B cell (primary cell): ENCODE measurements at regions of chr3 and their contacts with region 1.

Region 1: DNA sequence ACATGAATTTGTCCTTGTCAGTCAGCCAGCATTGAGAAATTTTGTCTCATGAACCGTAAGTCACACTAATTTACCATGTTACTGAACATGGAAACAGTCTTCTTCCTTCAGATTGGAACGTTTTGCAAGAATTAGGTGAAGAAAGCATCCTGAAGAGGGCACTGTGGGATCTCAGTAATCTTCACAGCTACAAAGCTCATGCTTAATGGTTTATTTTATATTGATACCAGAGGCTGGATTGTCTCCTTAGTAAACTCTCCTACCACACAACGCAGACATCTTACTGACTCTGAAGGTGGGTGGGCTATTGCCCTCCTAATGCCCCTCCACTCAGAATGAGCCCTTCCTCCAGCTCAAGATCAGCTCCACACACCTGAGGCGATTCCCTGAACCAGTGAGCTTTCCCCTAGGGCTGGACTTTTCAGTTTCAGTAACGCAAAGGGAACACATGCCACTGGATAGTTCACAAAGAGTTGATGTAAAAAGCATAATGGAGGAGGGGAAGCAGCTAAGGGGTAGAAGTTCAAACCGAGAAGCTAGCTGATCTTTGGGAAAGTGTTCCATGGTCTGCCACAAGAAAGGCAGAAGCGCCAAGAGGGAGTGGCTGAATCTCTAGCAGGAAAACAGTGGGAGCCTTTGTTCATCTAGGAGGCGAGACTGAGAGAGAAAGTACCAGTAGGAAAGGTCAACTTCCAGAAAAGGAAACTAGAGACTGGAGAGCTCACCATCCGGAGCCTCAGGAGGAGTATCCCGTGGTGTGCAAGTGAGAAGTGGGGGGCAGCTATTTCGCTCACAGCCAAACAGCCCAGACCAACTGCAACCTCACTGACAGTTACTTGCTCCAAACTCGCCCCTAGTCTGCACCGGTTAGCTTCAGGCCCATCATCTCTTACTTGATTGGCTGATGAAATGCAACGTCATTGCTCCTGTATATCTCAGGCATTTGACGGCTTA is at the start of gene SLC9C1:
- DNase-seq: peak; percentile 79
- ATAC-seq: peak; percentile 67
- H3K4me3 ChIP-seq: peak within 1 kb of the TSS; percentile 25 to 53 (median 41)
- H3K4me3 Mint-ChIP-seq: peak within 1 kb of the TSS; percentile 81
- H3K27ac ChIP-seq: peak within 1 kb of the TSS; percentile 30 to 45
- H3K27ac Mint-ChIP-seq: peak within 1 kb of the TSS; percentile 78
- H3K4me1 ChIP-seq: peaks cover 20 to 21% of the 10 kb centered on the region in 2 donors
- H3K4me1 Mint-ChIP-seq: peaks cover 30% of the 10 kb centered on the region
- H3K27me3 ChIP-seq: no peaks in the 10 kb centered on the region
- H3K27me3 Mint-ChIP-seq: no peaks in the 10 kb centered on the region
- CTCF ChIP-seq: peak; percentile 68
- total RNA-seq, gene SLC9C1: 0.41 and 0.49 TPM in 2 replicates

Region 2: GRCh38 chr3:112128843-112129727 is 164.6 kb before region 1 on chr3:
- CTCF ChIA-PET with region 1: interaction called, 10 read pairs
- POLR2A ChIA-PET with region 1: no interaction called
- intact Hi-C with region 1: loop called (anchors 5 kb)
- DNase-seq: peak; percentile 94
- ATAC-seq: peak; percentile 72
- H3K4me3 ChIP-seq: no peak overlapping the region
- H3K4me3 Mint-ChIP-seq: peak overlapping the region; percentile 50
- H3K27ac ChIP-seq: peak overlapping the region; percentile 93 to 98
- H3K27ac Mint-ChIP-seq: peak overlapping the region; percentile 91
- H3K4me1 ChIP-seq: peaks cover 76 to 90% of the 10 kb centered on the region in 2 donors
- H3K4me1 Mint-ChIP-seq: peaks cover 89% of the 10 kb centered on the region
- H3K27me3 ChIP-seq: no peaks in the 10 kb centered on the region
- H3K27me3 Mint-ChIP-seq: no peaks in the 10 kb centered on the region
- CTCF ChIP-seq: no peak

Region 3: DNA sequence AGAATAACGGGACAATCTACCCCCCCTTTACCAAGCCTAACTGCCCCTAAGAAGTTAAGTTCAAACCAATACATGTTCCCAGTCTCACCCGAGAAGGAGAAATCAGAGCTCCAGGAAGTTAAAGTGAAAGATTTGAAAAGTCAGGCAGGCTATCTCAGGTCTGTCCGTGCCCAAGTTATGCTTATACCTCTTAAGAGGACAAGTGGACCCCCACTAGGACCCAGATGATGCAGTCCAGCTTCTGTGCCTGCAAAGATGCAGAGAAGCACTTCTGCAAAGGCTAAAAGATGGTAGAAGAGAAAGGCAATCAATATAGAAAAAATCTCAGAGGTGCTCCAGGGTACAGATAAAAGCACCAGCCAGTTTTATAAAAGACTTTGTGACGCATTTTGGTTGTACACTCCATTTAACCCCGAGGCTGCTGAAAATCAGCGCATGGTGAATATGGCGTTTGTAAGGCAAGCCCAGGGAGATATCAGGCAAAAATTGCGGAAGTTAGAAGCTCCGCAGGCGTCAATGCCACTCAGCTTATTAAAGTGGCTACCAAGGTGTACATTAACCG is 10.2 kb after region 1 on chr3:
- CTCF ChIA-PET with region 1: interaction called, 40 read pairs
- POLR2A ChIA-PET with region 1: no interaction called
- intact Hi-C with region 1: no loop called
- DNase-seq: peak; percentile 77
- ATAC-seq: peak; percentile 86
- H3K4me3 ChIP-seq: peak overlapping the region; percentile 44 to 83 (median 68)
- H3K4me3 Mint-ChIP-seq: no peak overlapping the region
- H3K27ac ChIP-seq: peak overlapping the region; percentile 60 to 71
- H3K27ac Mint-ChIP-seq: no peak overlapping the region
- H3K4me1 ChIP-seq: peaks cover 22% of the 10 kb centered on the region in 2 donors
- H3K4me1 Mint-ChIP-seq: peaks cover 1% of the 10 kb centered on the region
- H3K27me3 ChIP-seq: no peaks in the 10 kb centered on the region
- H3K27me3 Mint-ChIP-seq: no peaks in the 10 kb centered on the region
- CTCF ChIP-seq: no peak

Region 4: DNA sequence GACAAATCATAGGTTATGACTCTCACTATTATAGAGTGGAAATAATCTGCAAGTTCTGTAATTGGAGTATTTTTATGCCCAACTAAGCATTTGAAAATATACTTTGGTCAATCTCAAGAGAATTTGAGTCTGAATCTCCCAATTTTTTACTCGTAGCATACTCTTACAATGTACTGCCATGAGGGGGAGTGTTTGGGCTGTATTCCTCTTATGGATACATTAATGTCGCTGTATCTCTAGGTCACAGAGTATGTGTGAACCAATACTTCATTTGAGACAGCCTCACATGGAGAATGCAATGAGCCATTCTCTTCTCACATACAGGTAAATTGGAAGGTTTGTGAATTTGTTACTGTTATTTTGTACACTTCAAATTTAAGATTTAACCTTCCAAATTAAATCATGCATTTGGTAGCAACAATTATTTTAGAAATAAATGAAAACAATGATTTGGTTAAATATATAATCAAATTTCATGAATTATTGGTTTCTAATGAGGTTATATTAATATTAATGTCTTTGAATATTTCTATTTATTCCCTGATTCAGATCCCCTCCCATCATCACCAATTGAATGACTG is 33.8 kb after region 1 on chr3:
- CTCF ChIA-PET with region 1: interaction called, 49 read pairs
- POLR2A ChIA-PET with region 1: no interaction called
- intact Hi-C with region 1: loop called (anchors 1 kb)
- DNase-seq: peak; percentile 80
- ATAC-seq: peak; percentile 99
- H3K4me3 ChIP-seq: no peak overlapping the region
- H3K4me3 Mint-ChIP-seq: no peak overlapping the region
- H3K27ac ChIP-seq: no peak overlapping the region
- H3K27ac Mint-ChIP-seq: no peak overlapping the region
- H3K4me1 ChIP-seq: peaks cover 1 to 3% of the 10 kb centered on the region in 2 donors
- H3K4me1 Mint-ChIP-seq: peaks cover 8% of the 10 kb centered on the region
- H3K27me3 ChIP-seq: no peaks in the 10 kb centered on the region
- H3K27me3 Mint-ChIP-seq: no peaks in the 10 kb centered on the region
- CTCF ChIP-seq: peak; percentile 88

Region 5: DNA sequence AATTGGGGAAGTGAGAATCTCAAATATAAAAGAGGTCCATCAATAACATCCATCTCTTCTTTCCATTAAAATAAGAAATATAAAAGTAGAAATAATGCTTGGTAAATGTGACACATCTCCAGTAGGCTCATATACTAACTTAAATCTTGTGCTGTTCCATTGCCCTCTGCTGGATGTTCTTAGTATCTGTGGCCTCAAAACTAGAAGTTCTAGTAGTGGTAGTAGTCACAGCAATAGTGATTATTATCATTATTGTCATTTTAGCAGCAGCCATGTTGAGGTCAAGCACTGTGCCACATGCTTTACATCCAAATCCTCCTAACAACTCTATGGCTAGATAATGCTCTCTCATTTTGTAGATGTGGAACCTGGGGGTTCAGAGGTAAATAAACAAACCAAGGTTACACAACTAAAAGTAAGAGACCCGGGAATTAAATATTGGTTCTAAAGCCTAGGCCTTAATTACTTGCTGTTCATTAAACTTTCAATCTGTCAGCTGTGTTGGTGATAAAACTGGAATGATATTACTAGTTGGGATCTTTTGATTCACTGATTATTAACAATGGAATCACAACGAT is 225.9 kb after region 1 on chr3:
- CTCF ChIA-PET with region 1: interaction called, 64 read pairs
- POLR2A ChIA-PET with region 1: no interaction called
- intact Hi-C with region 1: loop called (anchors 1 kb)
- DNase-seq: peak; percentile 79
- ATAC-seq: peak; percentile 86
- H3K4me3 ChIP-seq: no peak overlapping the region
- H3K4me3 Mint-ChIP-seq: peak overlapping the region; percentile 49
- H3K27ac ChIP-seq: peak overlapping the region in 1 of 2 donors; percentile 74
- H3K27ac Mint-ChIP-seq: peak overlapping the region; percentile 87
- H3K4me1 ChIP-seq: peaks cover 21 to 32% of the 10 kb centered on the region in 2 donors
- H3K4me1 Mint-ChIP-seq: peaks cover 35% of the 10 kb centered on the region
- H3K27me3 ChIP-seq: no peaks in the 10 kb centered on the region
- H3K27me3 Mint-ChIP-seq: no peaks in the 10 kb centered on the region
- CTCF ChIP-seq: peak; percentile 89

Region 6: DNA sequence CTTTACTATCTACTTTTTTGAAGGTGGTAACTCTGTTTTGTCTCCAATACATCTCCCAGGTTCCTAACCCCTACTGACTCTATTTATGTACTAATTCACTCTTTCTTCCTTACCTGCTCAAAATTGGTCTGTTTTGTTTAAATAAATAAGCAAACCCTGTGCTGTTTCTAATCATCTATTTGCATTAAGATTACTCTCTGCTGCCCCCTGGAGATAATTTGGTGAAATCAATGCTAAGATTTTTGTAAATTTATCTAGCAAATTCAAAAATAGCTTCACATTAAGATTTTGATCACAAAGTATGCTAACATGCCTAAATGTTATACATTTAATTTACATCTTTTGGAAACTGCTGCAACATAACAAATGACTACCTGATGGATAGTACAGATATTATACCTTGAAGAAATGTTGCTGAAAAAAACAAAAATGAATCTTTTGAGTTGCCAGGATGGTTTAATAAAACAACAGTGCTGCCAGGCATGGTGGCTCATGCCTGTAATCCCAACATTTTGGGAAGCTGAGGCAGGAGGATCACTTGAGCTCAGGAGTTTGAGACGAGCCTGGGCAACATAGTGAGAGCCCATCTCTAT is 685.7 kb after region 1 on chr3:
- CTCF ChIA-PET with region 1: interaction called, 4 read pairs
- POLR2A ChIA-PET with region 1: no interaction called
- intact Hi-C with region 1: loop called (anchors 10 kb)
- DNase-seq: peak; percentile 71
- ATAC-seq: peak; percentile 35
- H3K4me3 ChIP-seq: no peak overlapping the region
- H3K4me3 Mint-ChIP-seq: no peak overlapping the region
- H3K27ac ChIP-seq: no peak overlapping the region
- H3K27ac Mint-ChIP-seq: no peak overlapping the region
- H3K4me1 ChIP-seq: peaks cover 41 to 49% of the 10 kb centered on the region in 2 donors
- H3K4me1 Mint-ChIP-seq: peaks cover 61% of the 10 kb centered on the region
- H3K27me3 ChIP-seq: no peaks in the 10 kb centered on the region
- H3K27me3 Mint-ChIP-seq: no peaks in the 10 kb centered on the region
- CTCF ChIP-seq: peak; percentile 94